ENCODE measurements at regions of chr7 and their contacts with region 1.

Region 1: DNA sequence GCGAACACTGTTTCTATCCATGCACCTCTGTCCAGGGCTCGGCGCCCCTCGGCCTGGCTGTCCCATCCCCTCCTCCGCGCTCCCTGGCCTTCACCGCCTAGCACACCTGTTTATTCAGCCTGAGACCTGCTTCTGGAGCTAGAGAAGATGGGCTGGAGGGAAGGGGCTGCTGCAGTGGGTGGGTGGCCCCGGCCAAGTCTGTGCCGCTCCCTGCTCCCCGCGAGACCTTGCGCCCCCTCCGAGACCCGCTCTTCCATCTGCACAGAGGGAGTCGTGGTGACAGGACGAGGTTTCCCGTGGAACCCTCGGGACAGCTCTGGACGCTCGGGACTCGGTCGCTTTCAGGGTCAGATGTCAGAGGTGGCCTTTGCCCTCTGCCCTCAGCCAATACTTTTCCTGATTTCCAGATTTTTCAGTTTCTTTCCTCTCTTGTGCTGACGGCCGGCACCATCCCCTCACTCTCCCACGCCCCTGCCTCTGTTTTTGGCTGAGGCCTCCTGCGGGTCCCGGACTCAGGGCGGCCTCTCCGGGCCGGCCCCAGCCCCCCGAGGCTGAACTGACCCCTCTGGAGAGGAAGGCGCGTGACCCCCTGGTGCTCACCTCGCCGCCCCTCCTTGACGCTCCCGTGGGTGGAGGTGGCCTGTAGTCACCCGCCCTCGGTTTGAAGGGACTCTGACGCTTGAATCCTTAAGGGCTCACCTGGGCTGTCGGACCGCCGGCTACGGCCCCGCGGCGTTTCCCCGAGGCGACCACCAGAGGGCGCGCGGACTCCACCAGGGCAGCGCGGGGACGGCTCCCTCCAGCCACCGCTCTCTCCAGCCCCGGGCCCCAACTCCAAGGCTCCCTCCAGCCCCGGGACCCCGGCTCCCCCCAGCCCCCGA is 15.6 kb downstream of the SHH start:
- DNase-seq: peak; percentile 16 to 53 (median 34)
- H3K4me3 ChIP-seq: no peak overlapping the region
- H3K4me3 Mint-ChIP-seq: peak overlapping the region in 1 of 2 donors; percentile 28
- H3K27ac ChIP-seq: no peak overlapping the region
- H3K27ac Mint-ChIP-seq: no peak overlapping the region
- H3K4me1 ChIP-seq: peaks cover 10 to 12% of the 10 kb centered on the region in 2 donors
- H3K4me1 Mint-ChIP-seq: peaks cover 11% of the 10 kb centered on the region
- H3K27me3 ChIP-seq: peaks cover 14 to 48% of the 10 kb centered on the region in 2 donors
- H3K27me3 Mint-ChIP-seq: peaks cover 36 to 60% (median 43%) of the 10 kb centered on the region in 3 donors
- CTCF ChIP-seq: peak; percentile 93

Region 2: GRCh38 chr7:155694851-155695250 is 101.8 kb before region 1 on chr7:
- intact Hi-C with region 1: no loop called
- DNase-seq: no peak
- H3K4me3 ChIP-seq: no peak overlapping the region
- H3K4me3 Mint-ChIP-seq: no peak overlapping the region
- H3K27ac ChIP-seq: no peak overlapping the region
- H3K27ac Mint-ChIP-seq: no peak overlapping the region
- H3K4me1 ChIP-seq: no peaks in the 10 kb centered on the region
- H3K4me1 Mint-ChIP-seq: peaks cover 12% of the 10 kb centered on the region
- H3K27me3 ChIP-seq: no peaks in the 10 kb centered on the region
- H3K27me3 Mint-ChIP-seq: no peaks in the 10 kb centered on the region
- CTCF ChIP-seq: no peak

Region 3: DNA sequence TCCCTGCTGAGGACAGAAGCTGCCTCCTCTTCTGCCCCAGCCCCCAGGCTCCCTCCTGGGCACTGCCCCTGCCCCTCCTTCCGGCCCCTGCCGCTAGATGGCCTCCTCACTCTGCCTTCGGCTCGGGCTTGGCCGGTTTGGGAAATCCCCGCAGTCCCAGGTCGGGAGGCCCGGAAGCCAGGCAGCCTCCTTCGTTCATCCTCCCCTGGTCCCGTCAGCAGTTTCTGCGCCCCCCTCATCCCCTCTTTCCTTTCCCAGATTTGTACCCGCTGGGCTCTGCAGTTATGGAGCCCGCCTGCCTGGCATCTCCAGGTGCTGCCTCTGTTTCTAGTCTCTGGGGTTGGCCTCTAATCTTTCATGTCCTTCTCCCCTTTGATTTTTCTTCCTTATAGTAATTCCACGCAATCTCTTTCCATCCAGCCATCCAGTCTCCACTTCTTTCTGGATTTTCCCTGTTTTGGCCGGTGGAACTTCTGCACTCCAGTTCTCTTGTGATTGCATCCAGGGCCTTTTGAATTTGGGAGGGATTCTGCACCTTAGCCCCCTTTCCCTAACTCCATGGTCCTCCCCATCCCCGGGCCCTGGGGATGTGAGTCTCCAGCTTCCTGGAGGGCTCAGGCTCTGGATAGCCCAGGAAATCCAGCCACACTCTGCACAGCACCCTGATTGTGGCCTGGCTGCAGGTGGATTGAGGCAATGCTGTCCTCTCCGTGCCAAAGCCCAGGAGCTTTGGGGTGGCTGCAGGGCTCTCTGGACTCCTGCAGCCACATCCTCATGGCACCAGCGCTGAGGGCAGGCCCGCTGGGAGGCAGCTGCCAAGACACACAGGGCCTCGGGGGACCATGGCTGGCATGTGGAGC is 18.9 kb after region 1 on chr7:
- intact Hi-C with region 1: no loop called
- DNase-seq: peak in 1 of 3 donors; percentile 26
- H3K4me3 ChIP-seq: no peak overlapping the region
- H3K4me3 Mint-ChIP-seq: peak overlapping the region in 1 of 2 donors; percentile 71
- H3K27ac ChIP-seq: no peak overlapping the region
- H3K27ac Mint-ChIP-seq: peak overlapping the region in 1 of 7 donors; percentile 4
- H3K4me1 ChIP-seq: no peaks in the 10 kb centered on the region
- H3K4me1 Mint-ChIP-seq: peaks cover 11% of the 10 kb centered on the region
- H3K27me3 ChIP-seq: peaks cover 33 to 54% of the 10 kb centered on the region in 2 donors
- H3K27me3 Mint-ChIP-seq: peaks cover 56 to 70% (median 69%) of the 10 kb centered on the region in 3 donors
- CTCF ChIP-seq: no peak

Region 4: DNA sequence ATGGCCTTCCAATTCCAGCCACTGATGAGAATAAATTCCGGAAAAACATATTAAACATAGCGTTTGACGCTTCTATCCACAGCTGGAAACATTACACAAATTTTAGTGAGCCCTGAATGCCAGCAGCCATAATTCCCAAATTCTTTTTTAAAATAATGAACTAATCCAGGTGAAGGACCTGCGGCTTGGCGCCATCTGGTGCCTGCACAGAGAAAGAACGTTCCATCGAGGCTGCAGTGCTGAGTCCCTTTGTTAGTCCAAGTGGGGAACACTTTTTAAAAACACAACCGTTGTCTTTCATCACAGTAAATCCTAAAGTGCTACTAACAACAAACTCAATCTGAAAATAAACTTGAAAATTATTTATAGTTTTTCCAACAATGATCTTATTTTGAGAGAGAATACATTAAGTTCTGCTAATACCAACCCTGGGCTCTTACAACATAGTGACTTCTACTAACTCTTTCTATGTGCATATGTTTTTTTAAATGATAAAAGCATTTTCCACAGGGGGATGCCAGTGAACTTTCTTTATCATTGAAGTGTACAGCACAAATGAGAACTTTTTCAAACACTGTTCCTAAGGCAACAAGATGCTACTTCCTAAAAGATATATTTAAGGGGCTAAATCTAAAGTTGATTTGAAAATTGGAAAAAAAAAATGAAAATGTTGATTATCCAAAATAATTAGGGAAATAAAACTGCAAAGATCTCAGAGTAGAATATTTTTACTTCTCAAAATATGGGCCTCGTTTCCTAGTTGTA is 677.0 kb after region 1 on chr7:
- intact Hi-C with region 1: loop called in 1 of 2 experiments (anchors 10 kb)
- DNase-seq: no peak
- H3K4me3 ChIP-seq: no peak overlapping the region
- H3K4me3 Mint-ChIP-seq: no peak overlapping the region
- H3K27ac ChIP-seq: no peak overlapping the region
- H3K27ac Mint-ChIP-seq: no peak overlapping the region
- H3K4me1 ChIP-seq: peaks cover 0 to 3% of the 10 kb centered on the region in 2 donors
- H3K4me1 Mint-ChIP-seq: peaks cover 6% of the 10 kb centered on the region
- H3K27me3 ChIP-seq: no peaks in the 10 kb centered on the region
- H3K27me3 Mint-ChIP-seq: peaks cover 11 to 14% (median 12%) of the 10 kb centered on the region in 3 donors
- CTCF ChIP-seq: peak; percentile 37

Region 5: DNA sequence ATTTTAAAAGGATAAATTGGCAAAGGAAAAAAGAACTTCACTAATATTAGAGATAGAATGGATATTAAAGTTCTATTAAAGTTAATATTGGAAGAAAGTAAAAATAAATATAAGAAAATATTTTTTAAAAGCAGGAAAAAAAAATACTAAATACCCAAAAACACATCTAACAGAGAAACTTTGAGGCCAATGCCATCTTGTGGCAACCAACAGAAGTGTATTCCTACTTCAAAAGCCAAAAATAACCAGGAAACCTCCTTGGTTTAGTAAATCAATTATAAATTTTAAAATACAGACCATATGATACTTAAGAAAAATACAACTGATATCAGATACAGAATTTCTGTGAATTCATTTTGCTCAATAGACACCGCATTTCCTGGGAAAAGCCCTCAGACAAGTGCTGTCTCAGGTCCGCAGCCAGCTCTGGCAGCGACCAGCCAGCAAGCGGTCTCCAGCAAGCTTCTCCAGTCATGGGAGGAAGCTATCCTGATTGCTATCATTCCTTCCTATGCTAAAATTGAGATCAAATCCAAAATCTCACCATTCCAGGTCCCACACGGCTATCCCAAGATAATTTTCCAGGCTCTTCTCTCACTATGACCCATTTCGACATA is 1031.1 kb after region 1 on chr7:
- intact Hi-C with region 1: loop called (anchors 10 kb)
- DNase-seq: no peak
- H3K4me3 ChIP-seq: no peak overlapping the region
- H3K4me3 Mint-ChIP-seq: no peak overlapping the region
- H3K27ac ChIP-seq: no peak overlapping the region
- H3K27ac Mint-ChIP-seq: no peak overlapping the region
- H3K4me1 ChIP-seq: peaks cover 38 to 47% of the 10 kb centered on the region in 2 donors
- H3K4me1 Mint-ChIP-seq: peaks cover 39% of the 10 kb centered on the region
- H3K27me3 ChIP-seq: no peaks in the 10 kb centered on the region
- H3K27me3 Mint-ChIP-seq: no peaks in the 10 kb centered on the region
- CTCF ChIP-seq: peak; percentile 55

Region 6: GRCh38 chr7:156836443-156836842 is 1039.8 kb after region 1 on chr7:
- intact Hi-C with region 1: loop called in 1 of 2 experiments (anchors 10 kb)
- DNase-seq: no peak
- H3K4me3 ChIP-seq: no peak overlapping the region
- H3K4me3 Mint-ChIP-seq: no peak overlapping the region
- H3K27ac ChIP-seq: no peak overlapping the region
- H3K27ac Mint-ChIP-seq: no peak overlapping the region
- H3K4me1 ChIP-seq: peaks cover 23 to 29% of the 10 kb centered on the region in 2 donors
- H3K4me1 Mint-ChIP-seq: peaks cover 29% of the 10 kb centered on the region
- H3K27me3 ChIP-seq: no peaks in the 10 kb centered on the region
- H3K27me3 Mint-ChIP-seq: no peaks in the 10 kb centered on the region
- CTCF ChIP-seq: no peak

Region 7: GRCh38 chr7:157116762-157117161 is 1320.1 kb after region 1 on chr7:
- intact Hi-C with region 1: no loop called
- DNase-seq: no peak
- H3K4me3 ChIP-seq: no peak overlapping the region
- H3K4me3 Mint-ChIP-seq: no peak overlapping the region
- H3K27ac ChIP-seq: no peak overlapping the region
- H3K27ac Mint-ChIP-seq: no peak overlapping the region
- H3K4me1 ChIP-seq: no peaks in the 10 kb centered on the region
- H3K4me1 Mint-ChIP-seq: no peaks in the 10 kb centered on the region
- H3K27me3 ChIP-seq: no peaks in the 10 kb centered on the region
- H3K27me3 Mint-ChIP-seq: peaks cover 2 to 18% (median 17%) of the 10 kb centered on the region in 3 donors
- CTCF ChIP-seq: no peak

Region 8: GRCh38 chr7:157250605-157251228 is 1454.1 kb after region 1 on chr7:
- intact Hi-C with region 1: loop called in 1 of 2 experiments (anchors 10 kb)
- DNase-seq: peak; percentile 42 to 65 (median 56)
- H3K4me3 ChIP-seq: no peak overlapping the region
- H3K4me3 Mint-ChIP-seq: no peak overlapping the region
- H3K27ac ChIP-seq: no peak overlapping the region
- H3K27ac Mint-ChIP-seq: no peak overlapping the region
- H3K4me1 ChIP-seq: no peaks in the 10 kb centered on the region
- H3K4me1 Mint-ChIP-seq: no peaks in the 10 kb centered on the region
- H3K27me3 ChIP-seq: no peaks in the 10 kb centered on the region
- H3K27me3 Mint-ChIP-seq: no peaks in the 10 kb centered on the region
- CTCF ChIP-seq: peak; percentile 90

Measured in CD14-positive monocyte (primary cell).